ENCODE measurements at regions of chr19 and their contacts with region 1.

Region 1: DNA sequence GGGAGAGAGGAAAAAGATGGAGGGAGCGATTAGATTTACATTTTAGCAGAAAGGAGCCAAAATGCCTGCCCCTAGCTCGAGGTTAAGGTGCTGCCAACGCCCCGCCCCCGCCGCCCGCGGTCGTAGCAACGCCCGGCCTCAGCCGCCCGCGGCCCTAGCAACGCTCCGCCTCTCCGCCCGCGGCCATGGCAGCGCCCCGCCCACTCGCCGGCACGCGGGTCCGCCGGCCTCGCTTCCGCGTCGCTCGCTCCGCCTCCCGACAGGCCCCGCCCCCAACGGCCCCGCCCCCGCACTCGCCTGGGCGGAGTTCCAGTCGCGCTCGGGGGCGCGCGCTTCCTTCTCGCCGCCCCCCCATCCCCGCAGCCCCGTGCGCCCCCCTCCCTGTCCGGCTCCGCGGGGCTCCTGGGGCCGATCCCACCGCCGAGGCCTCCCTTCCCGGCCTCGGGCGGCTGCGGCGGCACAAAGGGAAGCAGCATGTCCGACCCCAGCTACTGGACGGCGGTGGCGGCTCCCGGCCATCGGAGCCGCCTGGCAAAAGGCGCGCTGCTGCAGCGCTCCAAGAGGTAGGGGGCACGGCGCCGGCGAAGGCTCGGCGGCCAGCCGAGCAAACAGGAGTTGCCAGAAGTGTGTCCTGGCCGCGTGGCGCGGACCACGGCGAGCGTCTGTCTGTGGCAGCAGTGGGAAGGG is 20.3 kb downstream of the MAST3 start:
- DNase-seq: peak; percentile 94
- H3K4me3 Mint-ChIP-seq: peak overlapping the region; percentile 73
- H3K27ac Mint-ChIP-seq: peak overlapping the region; percentile 37
- H3K4me1 Mint-ChIP-seq: peaks cover 32% of the 10 kb centered on the region
- H3K27me3 Mint-ChIP-seq: no peaks in the 10 kb centered on the region

Region 2: GRCh38 chr19:18091217-18091608 is 26.6 kb before region 1 on chr19:
- CTCF ChIA-PET with region 1: interaction called, 6 read pairs
- intact Hi-C with region 1: loop called (anchors 2 kb)
- DNase-seq: peak; percentile 94
- H3K4me3 Mint-ChIP-seq: peak overlapping the region; percentile 61
- H3K27ac Mint-ChIP-seq: peak overlapping the region; percentile 97
- H3K4me1 Mint-ChIP-seq: peaks cover 59% of the 10 kb centered on the region
- H3K27me3 Mint-ChIP-seq: no peaks in the 10 kb centered on the region

Region 3: GRCh38 chr19:18152444-18152816 is 34.6 kb after region 1 on chr19:
- CTCF ChIA-PET with region 1: interaction called, 8 read pairs
- intact Hi-C with region 1: loop called (anchors 1 kb)
- DNase-seq: peak; percentile 100
- H3K4me3 Mint-ChIP-seq: peak overlapping the region; percentile 79
- H3K27ac Mint-ChIP-seq: peak overlapping the region; percentile 93
- H3K4me1 Mint-ChIP-seq: peaks cover 22% of the 10 kb centered on the region
- H3K27me3 Mint-ChIP-seq: no peaks in the 10 kb centered on the region

Region 4: GRCh38 chr19:18167975-18168645 is 50.3 kb after region 1 on chr19:
- CTCF ChIA-PET with region 1: interaction called, 35 read pairs
- intact Hi-C with region 1: loop called (anchors 1 kb)
- DNase-seq: peak; percentile 76
- H3K4me3 Mint-ChIP-seq: no peak overlapping the region
- H3K27ac Mint-ChIP-seq: no peak overlapping the region
- H3K4me1 Mint-ChIP-seq: no peaks in the 10 kb centered on the region
- H3K27me3 Mint-ChIP-seq: no peaks in the 10 kb centered on the region

Measured in activated naive CD4-positive, alpha-beta T cell treated with anti-CD3 and anti-CD28 coated beads for 36 hours (primary cell).